ENCODE measurements at regions of chr9 and their contacts with region 1.

Region 1: DNA sequence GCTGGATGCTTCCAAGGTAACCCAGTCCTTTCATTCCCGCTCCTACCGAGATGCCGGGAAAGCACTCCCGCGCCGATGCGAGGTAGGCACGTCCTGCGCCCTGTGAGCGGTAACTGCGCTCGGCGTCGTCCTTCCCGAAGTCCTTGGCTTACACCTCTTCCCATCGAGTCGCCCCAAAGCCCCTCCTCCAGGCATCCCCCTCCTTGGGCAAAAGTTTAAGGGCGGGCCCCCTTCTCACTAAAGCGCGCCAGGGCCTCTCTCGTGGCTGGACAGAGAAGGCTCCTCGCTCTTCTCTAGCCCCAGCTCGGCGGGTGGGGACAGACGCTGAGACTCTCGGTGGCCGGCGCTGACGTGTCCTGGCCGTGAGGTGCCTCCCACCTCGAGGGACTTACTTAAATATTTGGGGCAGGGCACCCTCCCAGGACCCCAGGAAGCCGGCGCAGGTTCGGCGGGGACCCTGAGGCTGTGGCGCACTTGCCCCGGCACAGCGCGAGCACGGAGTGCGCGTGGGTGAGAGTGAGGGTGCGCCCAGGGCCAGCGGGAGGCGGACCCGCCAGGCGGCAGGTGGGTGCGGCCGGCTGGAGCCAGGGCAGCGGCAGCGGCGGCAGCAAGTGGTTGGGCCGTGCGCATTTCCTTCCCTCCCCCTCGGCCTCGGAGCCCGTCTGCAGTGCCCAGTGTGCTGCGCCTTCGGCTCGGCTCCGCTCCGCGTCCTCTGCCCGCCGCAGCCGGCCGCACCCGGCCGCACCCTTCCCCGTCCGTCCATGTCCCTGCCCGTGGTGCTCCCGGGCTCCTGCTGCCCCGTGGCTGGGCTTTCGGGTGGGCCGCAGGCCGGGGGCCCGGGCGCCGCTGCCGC is at the start of gene ENTREP1:
- DNase-seq: peak; percentile 70 to 79
- ATAC-seq: peak; percentile 80 to 82
- H3K4me3 ChIP-seq: peak within 1 kb of the TSS; percentile 64 to 81 (median 79)
- H3K27ac ChIP-seq: peak within 1 kb of the TSS; percentile 84 to 98 (median 96)
- H3K4me1 ChIP-seq: peaks cover 33 to 35% of the 10 kb centered on the region in 2 donors
- H3K27me3 ChIP-seq: no peaks in the 10 kb centered on the region
- CTCF ChIP-seq: peak; percentile 16 to 43 (median 29)
- POLR2A ChIP-seq: peak; percentile 78 to 82
- total RNA-seq, gene ENTREP1: 10.8 to 26.8 (median 17.1) TPM

Region 2: DNA sequence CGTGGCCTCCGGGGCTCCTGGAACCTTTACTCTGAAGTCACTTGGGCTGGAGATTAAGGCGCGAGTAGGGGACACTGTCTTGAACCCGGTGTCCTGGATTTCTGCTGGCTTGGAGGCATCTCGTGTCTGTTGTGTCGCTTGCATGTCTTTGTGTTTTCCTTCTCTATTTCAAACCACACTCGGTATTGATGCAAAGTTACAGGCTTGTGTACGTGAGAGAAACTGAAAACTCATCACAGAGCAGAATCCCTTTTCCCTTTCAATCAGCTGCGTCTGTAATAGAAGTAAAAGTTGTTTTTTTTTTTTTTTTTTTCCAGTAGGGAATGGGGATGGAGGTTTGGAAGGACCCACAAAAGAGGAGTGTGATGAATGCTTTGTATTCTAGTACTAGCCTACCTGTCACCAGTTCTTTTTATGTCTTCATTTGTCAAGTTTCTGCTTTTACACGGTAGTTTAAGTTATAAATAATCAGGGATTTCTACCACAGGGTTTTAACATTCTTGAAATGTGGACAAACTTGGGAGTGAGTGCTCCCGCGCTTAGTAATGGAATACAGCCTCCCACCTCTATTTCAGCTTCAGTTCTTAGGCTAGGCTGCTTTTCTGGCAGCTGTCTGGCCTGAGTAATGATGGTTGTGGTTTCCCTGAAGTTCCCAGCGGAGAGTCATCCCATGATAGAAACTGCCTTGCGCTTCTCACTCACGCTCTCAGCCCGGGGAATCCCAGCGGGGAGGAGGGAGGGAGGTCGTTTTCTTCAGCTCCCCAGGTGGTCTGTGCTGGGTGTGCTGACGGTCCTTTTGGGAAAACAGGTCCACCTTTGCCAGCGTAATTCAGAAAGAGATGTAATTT is 149.9 kb before region 1 on chr9:
- in situ Hi-C with region 1: no loop called
- intact Hi-C with region 1: loop called (anchors 5 kb)
- DNase-seq: peak; percentile 41 to 55
- ATAC-seq: peak; percentile 58 to 83
- H3K4me3 ChIP-seq: peak overlapping the region; percentile 70 to 89 (median 85)
- H3K27ac ChIP-seq: peak overlapping the region; percentile 83 to 93 (median 85)
- H3K4me1 ChIP-seq: peaks cover 5 to 10% of the 10 kb centered on the region in 2 donors
- H3K27me3 ChIP-seq: no peaks in the 10 kb centered on the region
- CTCF ChIP-seq: no peak
- POLR2A ChIP-seq: peak; percentile 18 to 54

Region 3: DNA sequence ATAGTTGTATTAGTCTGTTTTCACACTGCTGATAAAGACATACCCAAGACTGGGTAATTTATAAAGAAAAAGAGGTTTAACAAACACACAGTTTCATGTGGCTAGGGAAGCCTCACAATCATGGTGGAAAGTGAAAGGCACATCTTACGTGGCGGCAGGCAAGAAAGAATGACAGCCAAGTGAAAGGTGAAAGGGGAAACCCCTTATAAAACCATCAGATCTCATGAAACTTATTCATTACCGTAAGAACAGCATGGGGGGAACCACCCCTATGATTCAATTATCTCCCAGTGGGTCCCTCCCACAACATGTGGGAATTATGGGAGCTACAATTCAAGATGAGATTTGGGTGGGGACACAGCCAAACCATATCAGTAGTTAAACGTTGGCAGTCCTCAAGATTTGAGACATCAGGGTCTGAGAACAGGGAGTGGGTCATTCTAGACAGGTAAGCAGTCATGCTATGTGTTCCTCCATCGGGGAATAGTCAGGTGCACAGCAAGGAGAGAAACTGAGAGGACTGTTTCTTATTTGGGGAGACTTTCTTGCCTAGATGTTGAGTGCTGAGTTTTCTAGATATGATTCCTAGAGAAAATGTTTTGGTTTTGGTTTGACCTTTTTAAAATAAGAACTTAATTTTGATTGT is 45.6 kb before region 1 on chr9:
- in situ Hi-C with region 1: no loop called
- intact Hi-C with region 1: loop called (anchors 10 kb)
- DNase-seq: no peak
- ATAC-seq: no peak
- H3K4me3 ChIP-seq: no peak overlapping the region
- H3K27ac ChIP-seq: no peak overlapping the region
- H3K4me1 ChIP-seq: no peaks in the 10 kb centered on the region
- H3K27me3 ChIP-seq: no peaks in the 10 kb centered on the region
- CTCF ChIP-seq: no peak
- POLR2A ChIP-seq: no peak

Region 4: GRCh38 chr9:69364510-69365150 is 39.9 kb after region 1 on chr9:
- in situ Hi-C with region 1: no loop called
- intact Hi-C with region 1: no loop called
- DNase-seq: no peak
- ATAC-seq: peak; percentile 52 to 76
- H3K4me3 ChIP-seq: no peak overlapping the region
- H3K27ac ChIP-seq: peak overlapping the region; percentile 62 to 81 (median 74)
- H3K4me1 ChIP-seq: peaks cover 44 to 45% of the 10 kb centered on the region in 2 donors
- H3K27me3 ChIP-seq: no peaks in the 10 kb centered on the region
- CTCF ChIP-seq: no peak
- POLR2A ChIP-seq: no peak

Region 5: GRCh38 chr9:69385581-69386033 is 60.8 kb after region 1 on chr9:
- in situ Hi-C with region 1: loop called in 2 of 4 experiments (anchors 10 kb)
- intact Hi-C with region 1: loop called (anchors 2 kb)
- DNase-seq: no peak
- ATAC-seq: no peak
- H3K4me3 ChIP-seq: no peak overlapping the region
- H3K27ac ChIP-seq: peak overlapping the region; percentile 63 to 98 (median 96)
- H3K4me1 ChIP-seq: peaks cover 37 to 38% of the 10 kb centered on the region in 2 donors
- H3K27me3 ChIP-seq: no peaks in the 10 kb centered on the region
- CTCF ChIP-seq: no peak
- POLR2A ChIP-seq: no peak

Region 6: DNA sequence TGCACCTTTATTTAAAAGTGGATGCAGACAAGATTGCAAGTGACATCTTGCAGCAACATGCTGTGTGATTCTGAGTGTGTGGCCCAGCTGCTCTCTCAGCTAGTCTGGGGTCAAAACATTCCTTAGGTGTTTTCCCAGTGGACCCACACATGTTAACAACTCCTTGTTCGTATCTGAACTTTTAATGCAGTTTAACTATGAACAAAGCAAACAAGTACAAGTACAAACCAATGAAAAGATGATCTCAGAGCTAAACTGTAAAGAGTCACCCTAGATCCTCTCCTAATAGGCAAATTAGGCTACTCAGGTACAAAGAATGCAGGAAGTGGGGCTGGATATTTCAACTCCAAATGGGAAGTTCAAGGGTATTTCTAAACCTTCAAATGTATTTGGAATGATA is 108.6 kb after region 1 on chr9:
- in situ Hi-C with region 1: no loop called
- intact Hi-C with region 1: no loop called
- DNase-seq: no peak
- ATAC-seq: no peak
- H3K4me3 ChIP-seq: no peak overlapping the region
- H3K27ac ChIP-seq: no peak overlapping the region
- H3K4me1 ChIP-seq: no peaks in the 10 kb centered on the region
- H3K27me3 ChIP-seq: no peaks in the 10 kb centered on the region
- CTCF ChIP-seq: no peak
- POLR2A ChIP-seq: no peak

Region 7: GRCh38 chr9:69549310-69550202 is 224.8 kb after region 1 on chr9:
- in situ Hi-C with region 1: loop called in 1 of 4 experiments (anchors 25 kb)
- intact Hi-C with region 1: no loop called
- DNase-seq: no peak
- ATAC-seq: peak; percentile 62 to 64
- H3K4me3 ChIP-seq: no peak overlapping the region
- H3K27ac ChIP-seq: no peak overlapping the region
- H3K4me1 ChIP-seq: peaks cover 1 to 7% of the 10 kb centered on the region in 2 donors
- H3K27me3 ChIP-seq: no peaks in the 10 kb centered on the region
- CTCF ChIP-seq: peak; percentile 72 to 89 (median 79)
- POLR2A ChIP-seq: no peak

Measured in gastrocnemius medialis (tissue), 4 donors.